Activated T-helper 1 cell treated with anti-CD3 and anti-CD28 coated beads, Interleukin-12 subunit alpha, Interleukin-12 subunit beta, Interleukin-2, Interleukin-4 antibody, amounts not matched to agents 30 ng/mL and 10 ng/mL and 1 ng/mL, durations not matched to agents 14 hours and 24 hours and 36 hours (primary cell): ENCODE measurements at regions of chr11 and their contacts with region 1.

Region 1: GRCh38 chr11:32583459-32584271 is at the start of gene EIF3M:
- DNase-seq: peak; percentile 94
- H3K4me3 Mint-ChIP-seq: peak within 1 kb of the TSS; percentile 98
- H3K27ac Mint-ChIP-seq: peak within 1 kb of the TSS; percentile 98
- H3K4me1 Mint-ChIP-seq: peaks cover 38% of the 10 kb centered on the region
- H3K27me3 Mint-ChIP-seq: no peaks in the 10 kb centered on the region
- total RNA-seq, gene EIF3M: 315 and 332 TPM in 2 replicates

Region 2: GRCh38 chr11:31509429-31510345 is 1074.0 kb before region 1 on chr11 and contains the starts of genes ELP4 and IMMP1L:
- intact Hi-C with region 1: loop called (anchors 1 kb)
- DNase-seq: peak; percentile 94
- H3K4me3 Mint-ChIP-seq: peak within 1 kb of the TSS; percentile 99
- H3K27ac Mint-ChIP-seq: peak within 1 kb of the TSS; percentile 94
- H3K4me1 Mint-ChIP-seq: peaks cover 47% of the 10 kb centered on the region
- H3K27me3 Mint-ChIP-seq: no peaks in the 10 kb centered on the region
- total RNA-seq, gene ELP4: 15.1 and 17.3 TPM in 2 replicates
- total RNA-seq, gene IMMP1L: 22.3 and 24.6 TPM in 2 replicates

Region 3: GRCh38 chr11:32566517-32566916 is 17.1 kb before region 1 on chr11:
- intact Hi-C with region 1: loop called (anchors 2 kb)
- DNase-seq: no peak
- H3K4me3 Mint-ChIP-seq: no peak overlapping the region
- H3K27ac Mint-ChIP-seq: no peak overlapping the region
- H3K4me1 Mint-ChIP-seq: peaks cover 16% of the 10 kb centered on the region
- H3K27me3 Mint-ChIP-seq: peaks cover 2% of the 10 kb centered on the region

Region 4: GRCh38 chr11:32630844-32631243 is 47.2 kb after region 1 on chr11:
- intact Hi-C with region 1: no loop called
- DNase-seq: no peak
- H3K4me3 Mint-ChIP-seq: no peak overlapping the region
- H3K27ac Mint-ChIP-seq: no peak overlapping the region
- H3K4me1 Mint-ChIP-seq: no peaks in the 10 kb centered on the region
- H3K27me3 Mint-ChIP-seq: peaks cover 4% of the 10 kb centered on the region

Region 5: GRCh38 chr11:33039274-33040032 is 455.8 kb after region 1 on chr11 and contains the start of gene TCP11L1:
- intact Hi-C with region 1: loop called (anchors 10 kb)
- DNase-seq: peak; percentile 72
- H3K4me3 Mint-ChIP-seq: peak within 1 kb of the TSS; percentile 93
- H3K27ac Mint-ChIP-seq: peak within 1 kb of the TSS; percentile 90
- H3K4me1 Mint-ChIP-seq: peaks cover 20% of the 10 kb centered on the region
- H3K27me3 Mint-ChIP-seq: peaks cover 13% of the 10 kb centered on the region
- total RNA-seq, gene TCP11L1: 15.0 and 16.1 TPM in 2 replicates

Region 6: DNA sequence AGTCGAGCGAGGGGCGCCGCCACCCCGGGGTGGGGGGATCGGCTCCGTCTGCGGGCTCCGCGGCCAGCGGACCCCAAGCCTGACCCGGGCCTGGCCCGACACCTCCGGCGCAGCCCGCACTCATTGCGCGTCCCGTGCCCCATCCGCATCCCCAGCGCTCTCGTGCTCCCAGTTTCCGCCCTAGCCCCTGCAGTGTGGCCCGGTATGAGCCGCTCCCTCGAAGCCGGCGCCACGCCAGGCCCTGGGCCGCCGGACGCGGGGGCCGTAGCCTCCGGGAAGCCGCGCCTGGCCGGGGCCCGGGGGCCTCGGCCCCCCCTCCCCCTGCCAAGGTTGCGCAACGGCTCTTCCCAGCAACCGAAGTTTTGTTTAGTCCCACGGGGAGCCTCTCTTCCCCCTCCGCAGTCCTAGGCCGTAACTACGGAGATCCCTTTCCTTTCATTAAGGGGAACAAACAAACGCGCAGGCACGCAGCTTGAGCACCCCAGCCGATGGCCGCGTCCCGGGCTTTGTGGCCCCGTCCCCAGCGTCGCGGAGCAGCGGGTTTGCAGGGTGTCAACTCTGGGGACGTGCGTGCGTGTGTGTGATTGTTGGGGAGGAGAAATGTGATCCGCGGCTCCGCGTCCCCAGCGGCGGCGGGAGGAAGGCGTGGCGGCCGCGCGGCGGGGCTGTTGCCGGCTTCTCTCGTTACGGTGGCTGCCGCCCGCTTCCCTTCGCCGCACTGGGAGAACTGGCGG is 674.4 kb after region 1 on chr11:
- intact Hi-C with region 1: loop called (anchors 2 kb)
- DNase-seq: peak; percentile 72
- H3K4me3 Mint-ChIP-seq: peak overlapping the region; percentile 99
- H3K27ac Mint-ChIP-seq: peak overlapping the region; percentile 99
- H3K4me1 Mint-ChIP-seq: peaks cover 46% of the 10 kb centered on the region
- H3K27me3 Mint-ChIP-seq: peaks cover 2% of the 10 kb centered on the region

Region 7: GRCh38 chr11:33435216-33435615 is 851.6 kb after region 1 on chr11:
- intact Hi-C with region 1: no loop called
- DNase-seq: no peak
- H3K4me3 Mint-ChIP-seq: no peak overlapping the region
- H3K27ac Mint-ChIP-seq: no peak overlapping the region
- H3K4me1 Mint-ChIP-seq: no peaks in the 10 kb centered on the region
- H3K27me3 Mint-ChIP-seq: no peaks in the 10 kb centered on the region